PC-3 (cell line): ENCODE measurements at regions of chr1 and their contacts with region 1.

Region 1: GRCh38 chr1:177948336-177948972 is 21.4 kb downstream of the SEC16B start:
- DNase-seq: peak; percentile 70
- ATAC-seq: peak; percentile 76
- H3K4me3 ChIP-seq: peak overlapping the region; percentile 47; the same call in 1 of the 2 replicates
- H3K27ac ChIP-seq: no peak overlapping the region
- H3K4me1 ChIP-seq: no peaks in the 10 kb centered on the region
- H3K27me3 ChIP-seq: no peaks in the 10 kb centered on the region
- CTCF ChIP-seq: peak; percentile 84

Region 2: DNA sequence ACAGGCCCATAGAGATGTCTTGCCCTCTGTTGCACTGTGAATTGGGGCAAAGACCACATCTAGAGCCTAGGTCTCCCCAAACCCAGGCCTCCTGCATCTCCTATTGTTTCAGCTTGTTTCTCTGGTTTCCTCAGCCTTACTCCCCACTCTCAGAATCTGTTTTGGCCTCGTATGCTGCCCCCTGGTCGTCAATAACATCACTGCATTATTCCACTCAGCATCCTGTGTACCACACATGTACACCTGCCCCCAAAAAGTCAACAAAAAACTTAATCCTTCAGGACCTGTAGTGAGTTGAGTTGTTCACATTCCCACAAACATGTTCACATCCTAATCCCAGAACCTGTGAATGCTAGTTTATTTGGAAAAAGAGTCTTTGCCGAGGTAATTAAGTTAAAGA is 592.9 kb before region 1 on chr1:
- CTCF ChIA-PET with region 1: no interaction called
- POLR2A ChIA-PET with region 1: no interaction called
- intact Hi-C with region 1: loop called (anchors 10 kb)
- DNase-seq: peak; percentile 60
- ATAC-seq: peak; percentile 81
- H3K4me3 ChIP-seq: no peak overlapping the region
- H3K27ac ChIP-seq: no peak overlapping the region
- H3K4me1 ChIP-seq: 0 out of 2 replicates have a peak, but pooled peaks cover 3% of the 10 kb centered on the region
- H3K27me3 ChIP-seq: no peaks in the 10 kb centered on the region
- CTCF ChIP-seq: peak; percentile 72

Region 3: DNA sequence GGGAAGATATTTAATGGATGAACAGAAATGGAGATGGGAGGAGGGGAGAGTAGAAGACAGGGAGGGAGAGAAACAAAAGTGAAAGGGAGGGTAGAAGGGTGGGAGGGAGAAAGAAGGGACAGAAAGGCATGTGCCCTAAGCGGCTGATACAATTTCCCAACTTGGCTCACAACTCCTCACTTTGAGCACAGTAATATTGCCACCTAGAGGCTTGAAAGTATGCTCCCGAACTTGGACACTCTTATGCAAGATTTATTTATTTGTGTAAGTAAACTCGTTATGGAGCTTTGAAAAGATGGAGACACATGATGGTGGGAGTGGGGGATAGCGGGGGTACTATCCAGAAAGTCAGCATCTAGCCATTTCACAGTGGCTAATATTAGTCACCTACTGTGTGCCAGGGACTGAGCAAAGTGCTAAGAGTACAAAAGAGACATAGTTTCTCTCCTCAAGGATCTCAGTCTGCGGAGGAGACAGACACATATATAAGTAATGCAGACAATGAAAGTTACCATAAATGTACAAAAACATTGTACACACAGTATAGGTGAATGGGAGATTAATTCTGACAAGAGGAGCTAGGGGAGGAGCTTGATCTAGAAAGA is 168.3 kb before region 1 on chr1:
- CTCF ChIA-PET with region 1: no interaction called
- POLR2A ChIA-PET with region 1: no interaction called
- intact Hi-C with region 1: loop called (anchors 5 kb)
- DNase-seq: peak; percentile 73
- ATAC-seq: peak; percentile 70
- H3K4me3 ChIP-seq: no peak overlapping the region
- H3K27ac ChIP-seq: no peak overlapping the region
- H3K4me1 ChIP-seq: no peaks in the 10 kb centered on the region
- H3K27me3 ChIP-seq: no peaks in the 10 kb centered on the region
- CTCF ChIP-seq: peak; percentile 70